Activated CD4-positive, alpha-beta T cell treated with anti-CD3 and anti-CD28 coated beads for 36 hours (primary cell): ENCODE measurements at regions of chr14 and their contacts with region 1.

Region 1: DNA sequence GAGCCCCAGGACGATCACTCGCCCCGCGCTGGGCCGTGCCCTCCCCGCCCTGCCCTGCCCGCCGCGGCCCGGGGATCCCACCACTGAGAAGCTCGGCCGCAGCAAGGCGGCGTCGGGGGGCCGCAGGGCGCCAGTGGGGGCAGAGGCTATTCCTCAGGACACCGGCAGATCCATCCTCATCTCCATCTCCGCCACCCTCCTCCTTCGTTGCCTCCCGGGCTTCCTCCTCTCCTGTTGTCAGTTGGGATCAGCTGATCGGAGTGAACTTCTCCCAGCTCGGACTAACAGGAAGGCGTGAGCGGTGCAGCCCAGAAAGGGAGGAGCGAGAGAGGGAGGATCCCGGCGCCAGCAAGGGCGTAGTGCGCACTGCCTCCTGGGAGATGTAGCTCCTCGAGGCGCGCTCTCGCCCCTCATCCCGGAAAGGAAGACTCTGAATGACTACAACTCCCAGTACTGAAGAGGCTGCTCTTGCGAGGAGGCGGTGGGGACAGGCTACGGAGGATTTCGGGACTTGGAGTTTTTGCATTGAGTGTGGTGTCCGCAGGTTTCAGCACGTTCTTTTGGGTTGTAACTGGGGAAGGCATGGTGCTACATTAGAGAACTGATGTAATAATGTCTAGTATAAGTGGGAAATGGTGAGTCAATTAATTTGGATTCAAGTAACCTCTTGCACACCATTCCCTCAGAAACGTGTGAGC is at the start of gene ZFYVE1:
- DNase-seq: peak; percentile 96
- ATAC-seq: peak; percentile 100
- H3K4me3 Mint-ChIP-seq: peak within 1 kb of the TSS; percentile 84
- H3K27ac Mint-ChIP-seq: peak within 1 kb of the TSS; percentile 87
- H3K4me1 Mint-ChIP-seq: peaks cover 35% of the 10 kb centered on the region
- H3K27me3 Mint-ChIP-seq: no peaks in the 10 kb centered on the region
- total RNA-seq, gene ZFYVE1: 8.3 to 9.4 TPM

Region 2: GRCh38 chr14:73014105-73014504 is 12.9 kb before region 1 on chr14:
- CTCF ChIA-PET with region 1: interaction called, 5 read pairs
- POLR2A ChIA-PET with region 1: interaction called, 3 read pairs
- intact Hi-C with region 1: loop called in 1 of 2 experiments (anchors 1 kb)
- DNase-seq: peak; percentile 20
- ATAC-seq: peak; percentile 97
- H3K4me3 Mint-ChIP-seq: no peak overlapping the region
- H3K27ac Mint-ChIP-seq: peak overlapping the region; percentile 43
- H3K4me1 Mint-ChIP-seq: peaks cover 29% of the 10 kb centered on the region
- H3K27me3 Mint-ChIP-seq: no peaks in the 10 kb centered on the region

Region 3: GRCh38 chr14:73136387-73137225 is 109.6 kb after region 1 on chr14 and contains the start of gene PSEN1:
- CTCF ChIA-PET with region 1: no interaction called
- POLR2A ChIA-PET with region 1: interaction called, 8 read pairs
- intact Hi-C with region 1: loop called (anchors 1 kb)
- DNase-seq: peak; percentile 99
- ATAC-seq: peak; percentile 95
- H3K4me3 Mint-ChIP-seq: peak within 1 kb of the TSS; percentile 86
- H3K27ac Mint-ChIP-seq: peak within 1 kb of the TSS; percentile 82
- H3K4me1 Mint-ChIP-seq: peaks cover 31% of the 10 kb centered on the region
- H3K27me3 Mint-ChIP-seq: no peaks in the 10 kb centered on the region
- total RNA-seq, gene PSEN1: 31.2 to 31.6 TPM